IMR-90 (cell line): ENCODE measurements at regions of chr4 and their contacts with region 1.

Region 1: GRCh38 chr4:46444318-46445000 is 54.5 kb upstream of the GABRA2 start:
- DNase-seq: peak; percentile 78
- ATAC-seq: no peak; the same call in 1 of the 2 replicates
- H3K4me3 ChIP-seq: no peak overlapping the region
- H3K27ac ChIP-seq: no peak overlapping the region
- H3K4me1 ChIP-seq: peaks cover 2% of the 10 kb centered on the region; the same call in 1 of the 2 replicates
- H3K27me3 ChIP-seq: no peaks in the 10 kb centered on the region
- CTCF ChIP-seq: no peak
- POLR2A ChIP-seq: no peak
- RAD21 ChIP-seq: no peak

Region 2: GRCh38 chr4:46390355-46391058 is 54.0 kb before region 1 on chr4:
- CTCF ChIA-PET with region 1: no interaction called
- POLR2A ChIA-PET with region 1: no interaction called
- dilution Hi-C with region 1: no loop called
- in situ Hi-C with region 1: no loop called
- intact Hi-C with region 1: loop called (anchors 5 kb)
- DNase-seq: no peak
- ATAC-seq: peak; percentile 36
- H3K4me3 ChIP-seq: peak overlapping the region; percentile 7; the same call in 1 of the 2 replicates
- H3K27ac ChIP-seq: no peak overlapping the region
- H3K4me1 ChIP-seq: no peaks in the 10 kb centered on the region
- H3K27me3 ChIP-seq: peaks cover 27% of the 10 kb centered on the region
- CTCF ChIP-seq: no peak
- POLR2A ChIP-seq: no peak
- RAD21 ChIP-seq: no peak

Region 3: GRCh38 chr4:46503739-46504138 is 59.3 kb after region 1 on chr4:
- CTCF ChIA-PET with region 1: no interaction called
- POLR2A ChIA-PET with region 1: interaction called, 12 read pairs
- dilution Hi-C with region 1: no loop called
- in situ Hi-C with region 1: no loop called
- intact Hi-C with region 1: no loop called
- DNase-seq: no peak
- ATAC-seq: no peak
- H3K4me3 ChIP-seq: no peak overlapping the region
- H3K27ac ChIP-seq: no peak overlapping the region
- H3K4me1 ChIP-seq: no peaks in the 10 kb centered on the region
- H3K27me3 ChIP-seq: no peaks in the 10 kb centered on the region
- CTCF ChIP-seq: no peak
- POLR2A ChIP-seq: no peak
- RAD21 ChIP-seq: no peak